ENCODE measurements at regions of chr22 and their contacts with region 1.

Region 1: DNA sequence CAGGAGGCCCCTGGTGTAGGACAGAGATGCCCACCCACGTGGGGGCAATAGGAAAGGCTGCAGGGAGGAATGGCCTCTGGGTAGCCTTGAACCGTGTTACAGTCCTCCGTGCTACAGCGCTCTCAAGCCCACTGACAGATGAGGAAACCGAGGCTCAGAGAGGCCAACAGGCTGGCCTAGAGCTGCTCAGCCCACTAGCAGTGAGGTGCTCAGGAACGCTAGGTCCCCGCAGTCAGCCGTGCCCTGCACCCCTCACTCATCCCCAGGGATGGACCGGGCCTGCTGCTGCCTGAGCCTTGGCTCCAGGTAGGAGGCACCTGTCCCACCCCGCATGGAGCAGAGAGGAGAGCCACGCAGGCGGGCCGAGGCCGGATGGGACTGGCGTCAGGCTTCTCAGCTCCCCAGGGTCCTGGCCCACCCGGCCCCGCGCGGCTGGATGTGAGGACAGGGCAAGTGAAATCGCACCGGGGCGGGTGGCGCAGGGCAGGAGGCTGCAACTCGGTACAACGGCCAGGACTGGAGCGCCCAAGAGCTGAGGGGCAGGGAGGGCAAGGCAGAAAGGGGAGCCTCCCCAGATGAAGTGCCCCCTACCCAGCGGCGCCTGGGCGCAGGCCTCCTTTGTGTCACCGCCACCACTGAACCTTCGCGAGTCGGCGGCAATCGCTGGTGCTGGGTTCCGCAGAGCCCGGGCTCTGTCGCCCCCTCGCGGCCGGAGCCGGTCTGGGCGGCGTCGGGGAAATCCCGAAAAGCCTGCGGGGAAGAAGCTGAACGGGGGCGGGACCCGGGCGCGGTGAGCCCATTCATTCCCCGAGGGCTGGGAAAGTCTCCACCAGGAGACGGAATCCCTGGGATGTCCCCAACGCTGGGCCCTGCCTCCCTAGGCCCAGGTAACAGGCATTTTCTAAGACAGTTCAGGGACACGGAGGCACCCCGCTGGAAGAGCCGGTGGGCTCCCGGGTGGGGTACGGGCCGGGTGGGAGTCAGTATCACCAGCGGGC is 8.4 kb upstream of the SLC2A11 start:
- DNase-seq: peak; percentile 86
- H3K4me3 ChIP-seq: peak overlapping the region; percentile 54
- H3K27ac ChIP-seq: peak overlapping the region; percentile 82
- H3K4me1 ChIP-seq: peaks cover 75% of the 10 kb centered on the region
- CTCF ChIP-seq: peak; percentile 90

Region 2: GRCh38 chr22:23175817-23176644 is 673.3 kb before region 1 on chr22:
- CTCF ChIA-PET with region 1: no interaction called
- POLR2A ChIA-PET with region 1: no interaction called
- intact Hi-C with region 1: no loop called
- DNase-seq: peak; percentile 82
- H3K4me3 ChIP-seq: no peak overlapping the region
- H3K27ac ChIP-seq: peak overlapping the region; percentile 59
- H3K4me1 ChIP-seq: peaks cover 37% of the 10 kb centered on the region
- CTCF ChIP-seq: no peak

Region 3: GRCh38 chr22:23626286-23626975 is 222.9 kb before region 1 on chr22:
- CTCF ChIA-PET with region 1: no interaction called
- POLR2A ChIA-PET with region 1: no interaction called
- intact Hi-C with region 1: loop called (anchors 5 kb)
- DNase-seq: no peak
- H3K4me3 ChIP-seq: no peak overlapping the region
- H3K27ac ChIP-seq: no peak overlapping the region
- H3K4me1 ChIP-seq: no peaks in the 10 kb centered on the region
- CTCF ChIP-seq: no peak

Region 4: GRCh38 chr22:23750714-23751440 is 98.4 kb before region 1 on chr22 and contains the start of gene ZNF70:
- CTCF ChIA-PET with region 1: no interaction called
- POLR2A ChIA-PET with region 1: interaction called, 8 read pairs
- intact Hi-C with region 1: loop called (anchors 5 kb)
- DNase-seq: peak; percentile 94
- H3K4me3 ChIP-seq: peak within 1 kb of the TSS; percentile 78
- H3K27ac ChIP-seq: peak within 1 kb of the TSS; percentile 95
- H3K4me1 ChIP-seq: peaks cover 40% of the 10 kb centered on the region
- CTCF ChIP-seq: peak; percentile 50
- total RNA-seq, gene ZNF70: 5.1 and 6.0 TPM in 2 replicates

Region 5: GRCh38 chr22:23829845-23830372 is 19.4 kb before region 1 on chr22:
- CTCF ChIA-PET with region 1: interaction called, 14 read pairs
- POLR2A ChIA-PET with region 1: no interaction called
- intact Hi-C with region 1: no loop called
- DNase-seq: no peak
- H3K4me3 ChIP-seq: no peak overlapping the region
- H3K27ac ChIP-seq: no peak overlapping the region
- H3K4me1 ChIP-seq: peaks cover 20% of the 10 kb centered on the region
- CTCF ChIP-seq: no peak

Measured in OCI-LY7 (cell line).